H1 (cell line): ENCODE measurements at regions of chr16 and their contacts with region 1.

Region 1: GRCh38 chr16:19555162-19555937 is at the start of gene VPS35L:
- DNase-seq: peak; percentile 97 to 99
- H3K4me3 ChIP-seq: peak within 1 kb of the TSS; percentile 84 to 97 (median 91)
- H3K27ac ChIP-seq: peak within 1 kb of the TSS; percentile 96
- H3K4me1 ChIP-seq: peaks cover 0 to 6% (median 3%) of the 10 kb centered on the region in 4 experiments; a peak in 4 of 7 replicates
- H3K27me3 ChIP-seq: no peaks in the 10 kb centered on the region
- CTCF ChIP-seq: peak; percentile 82 to 90 (median 84)
- EP300 ChIP-seq: no peak; a peak in 1 of 3 replicates
- POLR2A ChIP-seq: peak; percentile 66 to 69
- RAD21 ChIP-seq: peak; percentile 35 to 45; a peak in 3 of 4 replicates
- total RNA-seq, gene VPS35L: 55.1 and 57.1 TPM in 2 replicates

Region 2: DNA sequence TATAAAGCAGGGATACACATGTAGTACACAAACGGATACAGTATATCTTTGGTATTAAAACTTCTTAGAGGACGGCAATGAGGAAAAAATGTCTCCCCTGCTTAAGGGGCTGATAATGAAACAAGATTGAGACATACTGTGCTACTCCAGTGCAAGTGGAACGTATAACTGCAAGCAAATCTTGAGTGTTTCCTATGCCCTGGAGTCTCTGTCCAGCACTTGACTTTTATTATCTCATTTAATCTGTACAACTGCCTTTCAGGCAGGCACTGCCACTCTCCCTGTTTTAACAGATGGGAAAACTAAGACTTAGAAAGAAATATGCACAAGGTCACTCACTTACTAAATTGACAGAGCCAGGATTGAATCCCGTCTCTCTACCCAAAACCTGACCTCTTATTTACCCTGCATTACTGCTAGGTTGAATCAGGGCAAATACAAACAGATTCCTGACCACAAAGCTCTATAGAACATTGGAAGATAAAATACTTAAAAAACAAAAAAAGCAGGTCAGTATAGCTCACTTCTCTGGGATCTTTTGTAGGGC is 109.0 kb before region 1 on chr16:
- CTCF ChIA-PET with region 1: no interaction called
- POLR2A ChIA-PET with region 1: no interaction called
- DNase-seq: no peak
- H3K4me3 ChIP-seq: no peak overlapping the region
- H3K27ac ChIP-seq: no peak overlapping the region
- H3K4me1 ChIP-seq: no peaks in the 10 kb centered on the region
- H3K27me3 ChIP-seq: no peaks in the 10 kb centered on the region
- CTCF ChIP-seq: no peak
- EP300 ChIP-seq: no peak
- POLR2A ChIP-seq: no peak
- RAD21 ChIP-seq: no peak

Region 3: GRCh38 chr16:19521471-19522396 is 33.6 kb before region 1 on chr16 and contains the start of gene GDE1:
- CTCF ChIA-PET with region 1: interaction called, 5 read pairs
- POLR2A ChIA-PET with region 1: interaction called, 31 read pairs
- DNase-seq: peak; percentile 85 to 97
- H3K4me3 ChIP-seq: peak within 1 kb of the TSS; percentile 85 to 92 (median 88)
- H3K27ac ChIP-seq: peak within 1 kb of the TSS; percentile 64
- H3K4me1 ChIP-seq: peaks cover 5 to 17% (median 11%) of the 10 kb centered on the region in 4 experiments; a peak in 6 of 7 replicates
- H3K27me3 ChIP-seq: no peaks in the 10 kb centered on the region
- CTCF ChIP-seq: peak; percentile 10 to 44 (median 34); a peak in 3 of 4 replicates
- EP300 ChIP-seq: no peak
- POLR2A ChIP-seq: peak; percentile 40 to 89
- RAD21 ChIP-seq: no peak
- total RNA-seq, gene GDE1: 65.8 and 70.8 TPM in 2 replicates

Region 4: DNA sequence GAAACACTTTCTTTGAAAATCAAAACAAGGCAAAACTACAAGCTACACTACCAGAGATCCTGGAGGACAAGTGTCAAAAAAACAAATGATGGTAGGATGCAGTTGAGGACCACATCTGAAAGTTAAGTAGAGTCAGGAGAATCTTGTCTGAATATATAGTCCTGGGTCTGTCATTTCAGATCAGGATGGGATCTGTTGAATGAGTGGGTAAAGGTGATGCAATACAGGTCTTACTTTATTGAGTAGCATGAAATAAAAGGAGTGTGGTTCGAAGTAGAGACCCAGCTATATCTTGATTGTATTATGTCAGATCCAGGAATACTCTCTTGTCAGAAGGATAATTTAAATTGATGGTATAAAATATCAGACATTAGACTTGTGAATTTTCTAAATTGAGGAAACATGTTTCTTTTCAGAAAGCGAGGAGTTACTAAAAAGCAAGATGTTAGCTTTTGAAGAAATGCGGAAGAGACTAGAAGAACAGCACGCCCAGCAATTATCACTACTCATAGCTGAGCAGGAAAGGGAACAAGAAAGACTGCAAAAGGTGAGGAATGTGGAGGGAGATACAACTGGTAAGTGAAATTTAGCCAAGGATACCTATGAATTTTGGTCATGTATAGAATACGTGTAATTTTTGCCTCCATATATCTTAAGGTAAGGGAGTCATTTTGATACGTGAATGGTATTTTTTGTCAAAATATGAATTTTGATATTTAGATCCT is 14.9 kb before region 1 on chr16:
- CTCF ChIA-PET with region 1: interaction called, 17 read pairs
- POLR2A ChIA-PET with region 1: interaction called, 8 read pairs
- DNase-seq: no peak
- H3K4me3 ChIP-seq: no peak overlapping the region
- H3K27ac ChIP-seq: no peak overlapping the region
- H3K4me1 ChIP-seq: no peaks in the 10 kb centered on the region
- H3K27me3 ChIP-seq: no peaks in the 10 kb centered on the region
- CTCF ChIP-seq: no peak
- EP300 ChIP-seq: no peak
- POLR2A ChIP-seq: no peak
- RAD21 ChIP-seq: no peak